Cardiac septum (tissue), 1 donor: ENCODE measurements at regions of chr2 and their contacts with region 1.

Region 1: DNA sequence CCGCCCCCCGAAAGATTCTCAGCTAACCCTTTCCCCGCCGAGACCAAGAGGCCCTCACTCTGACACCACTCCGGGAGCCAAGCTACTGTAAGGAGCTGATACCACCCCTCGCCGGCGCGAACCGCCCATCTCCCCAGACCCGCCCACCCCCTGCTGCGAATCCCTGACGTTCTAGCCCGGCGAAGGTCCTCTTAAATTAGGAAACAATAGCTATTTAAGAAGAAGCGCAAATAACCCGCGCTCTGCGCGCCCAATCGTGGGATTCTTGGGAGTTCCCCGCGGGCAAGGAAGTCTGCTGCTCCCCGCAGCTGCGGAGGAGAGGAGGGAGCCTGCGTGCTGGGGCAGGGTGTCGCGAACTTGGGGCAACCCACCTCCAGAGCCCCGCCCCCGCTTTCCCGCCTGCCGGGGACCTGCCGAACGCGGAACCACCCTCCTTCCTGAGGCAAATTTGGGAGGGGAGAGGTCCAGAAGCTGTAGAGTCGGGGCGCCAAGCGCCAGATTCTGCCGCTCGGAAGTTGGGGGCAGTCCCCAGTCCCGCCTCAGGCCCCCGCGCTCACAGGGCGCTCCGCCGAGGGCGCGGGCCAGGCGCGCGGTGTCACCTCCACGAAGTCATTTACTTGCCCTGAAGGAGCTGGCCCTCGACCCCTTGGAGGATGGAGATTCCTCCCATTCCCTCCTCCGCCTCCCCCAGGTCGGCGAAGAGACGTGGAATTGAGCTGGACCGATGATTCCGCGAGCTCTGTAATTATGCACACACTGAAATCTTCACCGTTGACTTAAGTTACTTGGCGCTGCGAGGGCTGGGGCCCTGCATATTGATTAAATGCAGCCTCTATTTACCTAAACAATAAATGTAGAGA is 8.4 kb upstream of the SP9 start:
- DNase-seq: no peak

Region 2: DNA sequence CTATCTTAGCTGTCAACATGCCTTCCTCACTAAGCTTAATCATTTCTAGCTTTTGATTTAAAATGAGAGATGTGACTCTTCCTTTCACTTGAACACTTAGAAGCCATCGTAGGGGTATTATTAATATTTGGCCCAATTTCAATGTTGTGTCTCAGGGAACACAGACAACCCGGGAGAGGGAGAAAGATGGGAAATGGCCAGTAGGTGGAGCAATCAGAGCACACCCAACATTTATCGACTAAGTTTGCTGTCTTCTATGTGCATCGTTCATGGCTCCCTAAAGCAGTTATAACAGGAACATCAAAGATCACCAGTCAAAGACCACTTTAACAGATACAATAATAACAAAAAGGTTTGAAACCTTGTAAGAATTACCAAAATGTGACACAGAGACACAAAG is 188.2 kb before region 1 on chr2:
- intact Hi-C with region 1: no loop called
- DNase-seq: no peak

Region 3: DNA sequence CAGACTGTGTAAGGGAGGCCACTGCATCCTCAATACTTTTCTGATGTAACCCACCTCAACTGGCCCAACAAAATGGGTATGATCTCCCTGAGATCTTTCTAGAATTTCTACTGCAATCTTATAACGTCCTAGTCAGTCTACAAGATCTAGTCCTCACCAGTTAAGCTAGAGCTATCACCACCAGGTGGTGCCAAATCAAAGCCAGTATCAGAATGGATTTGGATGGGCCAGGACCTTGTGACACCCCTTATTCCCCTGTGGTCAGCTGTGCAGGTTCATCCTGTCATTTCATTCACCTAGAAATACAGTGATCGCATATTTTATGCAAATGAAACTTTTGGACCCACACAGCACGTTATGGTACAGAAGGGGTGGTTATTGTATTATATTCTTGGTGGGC is 168.4 kb before region 1 on chr2:
- intact Hi-C with region 1: loop called (anchors 5 kb)
- DNase-seq: no peak

Region 4: DNA sequence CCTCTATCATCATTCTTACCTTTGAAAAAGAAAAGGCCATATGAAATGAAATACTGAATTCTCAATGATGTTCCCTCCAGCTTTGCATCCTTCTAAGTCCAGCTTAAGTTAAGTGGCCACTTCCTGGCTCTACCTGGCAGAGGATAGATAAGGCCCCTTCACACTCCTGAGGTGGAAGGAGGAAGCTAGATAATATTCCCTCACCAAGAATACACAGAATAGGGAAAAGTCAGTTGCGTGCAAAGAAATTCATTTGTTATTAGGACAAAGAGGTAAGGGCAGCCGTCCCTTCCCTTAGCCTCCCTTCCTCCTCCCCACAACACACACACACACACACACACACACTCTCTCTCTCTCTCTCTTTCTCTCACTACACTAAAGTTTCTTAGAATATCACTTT is 115.5 kb before region 1 on chr2:
- intact Hi-C with region 1: no loop called
- DNase-seq: no peak

Region 5: GRCh38 chr2:174593574-174594203 is 267.3 kb after region 1 on chr2:
- intact Hi-C with region 1: no loop called
- DNase-seq: no peak